ENCODE measurements at regions of chr1 and their contacts with region 1.

Region 1: DNA sequence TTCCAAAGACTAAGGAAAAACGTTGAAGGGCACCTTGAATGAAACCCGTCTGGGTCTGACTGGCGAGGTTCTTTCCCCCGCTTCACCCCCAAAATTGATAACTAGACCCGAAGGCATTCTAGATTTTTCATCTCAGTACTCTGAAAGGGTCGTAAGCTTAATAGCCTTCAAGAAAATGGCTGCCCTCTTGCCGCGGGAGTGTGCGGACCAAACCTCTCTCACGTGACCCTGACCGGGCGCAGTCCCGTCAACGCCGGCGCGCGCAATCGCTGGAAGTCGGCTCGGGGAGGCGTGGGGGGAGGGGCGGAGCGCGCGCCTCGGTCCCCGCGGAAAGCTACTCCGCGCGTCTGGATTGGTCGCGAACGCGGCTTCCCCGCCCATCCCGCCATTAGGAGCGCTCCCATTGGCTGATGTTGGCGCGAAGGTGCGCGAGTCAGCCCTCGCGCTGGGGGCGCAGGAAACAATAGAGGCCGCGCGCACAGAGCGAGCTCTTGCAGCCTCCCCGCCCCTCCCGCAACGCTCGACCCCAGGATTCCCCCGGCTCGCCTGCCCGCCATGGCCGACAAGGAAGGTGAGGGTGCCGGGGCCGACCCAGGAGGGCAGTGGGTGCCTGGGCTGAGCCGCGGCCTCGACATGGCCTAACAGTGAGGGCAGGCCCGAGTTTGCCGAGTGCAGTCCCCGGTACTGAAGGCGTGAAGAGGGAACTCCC is at the start of gene RBBP4:
- DNase-seq: peak; percentile 98
- H3K4me3 Mint-ChIP-seq: peak within 1 kb of the TSS; percentile 97
- H3K27ac Mint-ChIP-seq: peak within 1 kb of the TSS; percentile 100
- H3K4me1 Mint-ChIP-seq: peaks cover 50% of the 10 kb centered on the region
- H3K27me3 Mint-ChIP-seq: no peaks in the 10 kb centered on the region
- total RNA-seq, gene RBBP4: 381 to 409 TPM

Region 2: DNA sequence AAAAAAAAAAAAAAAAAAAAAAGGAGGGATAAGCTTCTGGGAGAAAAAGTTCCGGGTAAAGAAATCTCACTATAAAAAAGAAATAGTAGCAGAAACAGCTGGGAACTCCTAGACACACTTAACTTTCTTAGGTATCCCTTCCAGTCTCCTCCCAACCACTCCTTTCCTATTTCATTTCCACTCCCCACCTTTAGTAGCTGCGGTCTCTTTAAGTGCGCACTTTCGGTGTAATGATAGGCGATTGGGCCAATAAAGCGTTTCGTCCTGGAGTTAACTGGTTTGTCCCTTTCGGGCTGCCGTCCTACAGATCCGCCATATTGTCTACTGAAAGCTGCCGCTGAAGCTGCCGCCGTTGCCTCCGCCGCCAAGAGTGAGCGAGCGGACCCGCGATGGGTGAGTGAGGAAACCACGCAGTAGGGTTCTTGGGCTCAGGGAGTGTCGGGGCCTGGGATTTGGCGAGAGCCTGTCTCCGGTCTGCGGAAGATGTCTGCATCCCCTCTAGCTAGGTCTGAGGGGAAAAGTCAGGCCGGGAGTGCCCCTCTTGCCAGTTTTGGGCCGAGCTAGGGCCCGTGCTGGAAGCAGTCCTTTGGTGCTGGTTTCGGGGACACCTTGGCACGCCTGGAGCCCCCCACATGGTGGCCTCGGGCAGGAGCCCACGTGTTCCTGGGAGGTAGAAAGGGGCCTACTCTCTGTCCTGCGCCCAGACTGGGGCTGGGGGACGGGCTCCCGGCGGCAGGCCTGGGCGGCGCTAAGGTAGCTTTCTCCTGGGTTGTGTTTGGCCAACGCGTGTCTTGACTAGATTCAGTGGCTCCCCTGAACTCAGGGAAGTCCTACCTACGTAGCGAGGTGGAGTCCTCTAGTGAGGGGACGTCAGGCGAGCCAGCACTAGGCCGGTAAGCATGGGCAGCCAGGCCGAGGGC is 542.9 kb before region 1 on chr1 and contains the start of gene KPNA6:
- CTCF ChIA-PET with region 1: no interaction called
- intact Hi-C with region 1: loop called (anchors 5 kb)
- DNase-seq: peak; percentile 97
- H3K4me3 Mint-ChIP-seq: peak within 1 kb of the TSS; percentile 99
- H3K27ac Mint-ChIP-seq: peak within 1 kb of the TSS; percentile 94
- H3K4me1 Mint-ChIP-seq: peaks cover 42% of the 10 kb centered on the region
- H3K27me3 Mint-ChIP-seq: no peaks in the 10 kb centered on the region
- total RNA-seq, gene KPNA6: 74.5 to 75.0 TPM

Region 3: DNA sequence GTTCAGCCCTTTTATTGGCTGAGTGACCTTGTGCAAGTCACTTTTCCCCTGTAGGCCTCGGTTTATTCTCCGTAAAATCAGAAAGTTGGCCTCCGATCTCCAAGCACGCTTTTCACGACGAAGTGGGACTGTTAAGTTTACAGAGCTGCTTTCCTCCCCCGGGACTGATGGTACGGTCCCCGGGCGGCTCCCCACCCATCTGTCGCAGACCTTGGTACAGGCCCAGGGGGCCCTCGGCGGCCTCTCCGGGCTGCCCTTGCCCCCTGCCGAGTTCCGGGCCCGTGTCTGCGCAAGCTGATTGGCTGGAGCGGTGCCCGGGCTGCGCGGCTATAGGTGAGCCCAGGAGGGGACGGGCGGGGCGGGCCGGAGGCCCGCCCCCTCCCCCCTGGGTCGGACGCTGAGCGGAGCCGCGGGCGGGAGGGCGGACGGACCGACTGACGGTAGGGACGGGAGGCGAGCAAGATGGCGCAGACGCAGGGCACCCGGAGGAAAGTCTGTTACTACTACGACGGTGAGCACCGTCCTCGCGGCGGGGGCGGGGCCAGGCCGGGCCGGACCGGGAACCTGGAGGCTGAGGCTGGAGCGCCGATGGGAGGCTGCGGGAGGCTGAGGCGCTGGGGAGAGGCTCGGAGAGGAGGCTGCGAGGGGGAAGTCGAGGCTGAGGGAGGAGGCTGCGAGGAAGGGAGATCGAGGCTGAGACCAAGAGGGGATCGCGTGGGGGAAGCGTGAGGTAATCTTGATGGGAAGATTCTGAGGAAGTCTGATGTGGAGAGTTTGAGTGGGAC is 359.0 kb before region 1 on chr1 and contains the start of gene HDAC1:
- CTCF ChIA-PET with region 1: no interaction called
- intact Hi-C with region 1: loop called (anchors 1 kb)
- DNase-seq: peak; percentile 97
- H3K4me3 Mint-ChIP-seq: peak within 1 kb of the TSS; percentile 100
- H3K27ac Mint-ChIP-seq: peak within 1 kb of the TSS; percentile 98
- H3K4me1 Mint-ChIP-seq: peaks cover 48% of the 10 kb centered on the region
- H3K27me3 Mint-ChIP-seq: no peaks in the 10 kb centered on the region
- total RNA-seq, gene HDAC1: 111 to 120 TPM

Region 4: DNA sequence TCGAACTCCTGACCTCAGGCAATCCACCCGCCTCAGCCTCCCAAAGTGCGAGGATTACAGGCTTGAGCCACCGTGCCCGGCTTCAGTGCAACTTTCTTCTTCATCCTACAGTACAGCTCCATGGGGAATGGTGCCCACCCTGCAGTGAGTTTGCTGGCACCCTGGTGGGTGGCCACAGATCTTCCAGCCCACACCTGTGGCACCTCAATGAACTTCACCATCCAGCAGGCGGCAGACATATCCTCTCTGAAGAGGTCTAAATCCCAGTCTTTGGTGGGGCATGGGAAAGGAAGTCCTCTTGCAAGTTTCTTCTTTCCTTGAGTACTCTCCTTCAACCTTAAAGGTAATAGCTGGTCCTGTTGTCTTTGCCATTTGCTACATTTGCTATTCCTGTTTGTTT is 129.7 kb before region 1 on chr1:
- CTCF ChIA-PET with region 1: interaction called, 15 read pairs
- intact Hi-C with region 1: loop called (anchors 1 kb)
- DNase-seq: no peak
- H3K4me3 Mint-ChIP-seq: peak overlapping the region; percentile 66
- H3K27ac Mint-ChIP-seq: no peak overlapping the region
- H3K4me1 Mint-ChIP-seq: peaks cover 3% of the 10 kb centered on the region
- H3K27me3 Mint-ChIP-seq: no peaks in the 10 kb centered on the region

Region 5: DNA sequence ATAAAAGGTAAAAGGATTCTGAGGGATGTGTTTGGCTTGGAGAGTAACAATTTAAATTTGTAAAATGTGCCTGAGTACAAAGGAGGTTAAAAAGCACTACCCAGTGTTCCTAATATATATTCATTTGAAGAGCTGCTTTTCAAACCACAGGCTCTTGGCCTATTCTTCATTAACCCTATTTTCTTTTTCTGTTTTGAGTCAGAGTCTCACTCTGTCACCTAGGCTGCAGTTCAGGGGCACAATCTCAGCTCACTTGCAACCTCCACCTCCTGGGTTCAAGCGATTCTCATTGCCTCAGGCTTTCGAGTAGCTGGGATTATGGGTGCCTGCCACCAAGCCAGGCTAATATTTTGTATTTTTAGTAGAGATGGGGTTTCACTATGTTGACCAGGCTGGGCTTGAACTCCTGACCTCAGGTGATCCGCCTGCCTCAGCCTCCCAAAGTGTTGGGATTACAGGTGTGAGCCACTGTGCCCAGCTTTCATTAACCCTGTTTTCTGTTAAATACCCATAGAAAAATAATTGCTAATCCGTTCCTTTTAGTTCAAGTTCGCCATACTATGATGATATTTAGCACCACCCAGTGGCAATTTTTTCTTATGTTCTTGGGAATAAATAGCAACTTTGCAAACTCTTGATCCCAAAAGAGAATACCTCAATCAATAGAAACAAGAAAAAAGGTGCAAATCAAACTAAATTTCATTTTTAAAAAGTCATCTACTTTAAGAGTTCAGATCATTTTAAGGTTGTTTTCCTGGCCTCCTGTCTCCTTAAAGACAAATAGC is 31.0 kb before region 1 on chr1:
- CTCF ChIA-PET with region 1: interaction called, 4 read pairs
- intact Hi-C with region 1: loop called (anchors 1 kb)
- DNase-seq: no peak
- H3K4me3 Mint-ChIP-seq: no peak overlapping the region
- H3K27ac Mint-ChIP-seq: no peak overlapping the region
- H3K4me1 Mint-ChIP-seq: peaks cover 36% of the 10 kb centered on the region
- H3K27me3 Mint-ChIP-seq: no peaks in the 10 kb centered on the region

Region 6: GRCh38 chr1:32801096-32801715 is 150.3 kb after region 1 on chr1:
- CTCF ChIA-PET with region 1: no interaction called
- intact Hi-C with region 1: loop called (anchors 1 kb)
- DNase-seq: peak; percentile 68
- H3K4me3 Mint-ChIP-seq: peak overlapping the region; percentile 34
- H3K27ac Mint-ChIP-seq: peak overlapping the region; percentile 88
- H3K4me1 Mint-ChIP-seq: peaks cover 63% of the 10 kb centered on the region
- H3K27me3 Mint-ChIP-seq: no peaks in the 10 kb centered on the region

Region 7: DNA sequence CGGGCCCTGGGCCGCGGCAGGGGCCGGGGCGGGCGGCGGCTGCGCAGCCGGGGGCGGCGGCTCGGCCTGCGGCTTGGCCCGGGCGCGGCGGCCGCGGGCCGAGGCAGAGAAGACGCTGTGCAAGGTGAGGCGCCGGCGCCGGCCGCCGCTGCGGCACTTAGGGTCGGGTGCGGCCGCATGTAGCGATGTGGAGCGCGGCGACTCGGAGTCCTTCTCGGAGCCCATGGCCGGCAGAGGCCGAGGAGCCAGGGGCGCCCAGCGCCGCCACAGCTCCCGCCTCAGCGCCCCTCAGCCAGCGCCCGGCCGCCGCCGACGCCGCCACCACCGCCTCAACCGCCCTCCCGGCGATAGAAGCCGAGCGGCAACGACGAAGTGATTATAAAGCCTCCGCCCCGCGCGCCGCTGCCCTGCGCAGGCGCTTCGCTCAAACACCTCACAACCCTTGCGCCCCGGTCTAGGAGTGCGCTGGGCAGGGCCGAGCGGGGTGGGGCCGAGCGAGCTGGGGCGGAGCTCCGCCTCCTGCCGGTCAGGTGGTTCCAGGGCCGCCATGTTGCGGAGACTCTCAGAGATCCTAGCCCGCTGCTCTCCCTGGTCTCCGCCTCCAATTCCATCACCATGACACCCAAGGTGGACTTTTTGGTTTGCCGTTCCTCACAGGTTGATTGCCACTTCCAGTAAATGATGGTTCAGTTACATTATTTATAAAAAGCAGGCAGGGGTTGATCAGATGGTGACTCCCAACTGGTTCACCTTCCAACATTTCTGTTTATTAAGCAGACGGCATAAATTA is 313.8 kb after region 1 on chr1 and contains the start of gene RNF19B:
- CTCF ChIA-PET with region 1: no interaction called
- intact Hi-C with region 1: loop called (anchors 5 kb)
- DNase-seq: peak; percentile 97
- H3K4me3 Mint-ChIP-seq: peak within 1 kb of the TSS; percentile 86
- H3K27ac Mint-ChIP-seq: peak within 1 kb of the TSS; percentile 82
- H3K4me1 Mint-ChIP-seq: peaks cover 48% of the 10 kb centered on the region
- H3K27me3 Mint-ChIP-seq: no peaks in the 10 kb centered on the region
- total RNA-seq, gene RNF19B: 12.5 to 13.3 TPM

Measured in activated naive CD4-positive, alpha-beta T cell treated with anti-CD3 and anti-CD28 coated beads for 36 hours (primary cell).